Activated CD4-positive, alpha-beta T cell treated with anti-CD3 and anti-CD28 coated beads, Interleukin-2, amount 10 ng/mL, durations not matched to agents 24 days and 14 days (primary cell): ENCODE measurements at regions of chr5 and their contacts with region 1.

Region 1: GRCh38 chr5:100903039-100903887 is at the start of gene ST8SIA4:
- DNase-seq: peak; percentile 97
- H3K4me3 Mint-ChIP-seq: peak within 1 kb of the TSS; percentile 99
- H3K27ac Mint-ChIP-seq: peak within 1 kb of the TSS; percentile 96
- H3K4me1 Mint-ChIP-seq: peaks cover 35% of the 10 kb centered on the region
- H3K27me3 Mint-ChIP-seq: no peaks in the 10 kb centered on the region
- total RNA-seq, gene ST8SIA4: 61.3 and 62.3 TPM in 2 replicates

Region 2: DNA sequence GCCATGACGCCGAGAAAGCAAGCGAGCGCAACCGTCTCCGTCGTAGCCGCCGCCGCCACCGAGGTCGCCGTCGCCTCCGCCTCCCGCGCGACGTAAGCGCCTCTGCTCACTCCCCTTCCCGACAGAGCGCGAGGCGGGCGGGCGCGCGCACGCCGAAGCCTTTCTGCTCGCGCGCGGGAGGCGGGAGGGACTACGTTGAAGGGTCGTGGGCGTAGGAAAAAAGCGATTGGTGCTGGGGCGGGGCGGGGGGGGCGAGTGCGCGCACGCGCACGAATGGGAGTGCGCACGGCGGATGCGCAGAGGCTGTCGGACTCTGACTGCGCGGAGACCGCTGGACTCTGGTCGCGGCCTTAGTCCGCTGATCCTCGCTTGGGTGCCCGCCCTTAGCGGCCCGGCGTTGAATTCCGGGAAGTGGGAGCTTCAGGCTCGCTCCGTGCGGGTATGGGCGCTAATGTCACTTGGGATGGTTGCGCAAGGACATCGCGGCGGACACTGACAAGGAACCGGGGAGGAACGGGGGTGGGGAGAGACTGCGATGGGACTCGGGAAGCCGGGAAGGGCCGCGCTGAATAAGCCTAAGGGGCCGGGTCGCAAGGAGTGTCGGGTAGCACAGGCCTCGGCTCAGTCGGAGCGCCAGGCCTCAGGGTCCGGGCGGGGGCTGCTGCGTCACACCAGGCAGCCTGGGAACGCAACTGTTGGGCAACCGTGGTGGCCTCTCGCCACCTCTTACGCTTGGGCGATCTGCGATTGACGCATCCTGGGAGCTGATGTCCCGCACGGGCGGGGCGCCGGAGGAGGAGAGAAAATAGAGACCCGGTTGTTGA is 1974.2 kb before region 1 on chr5 and contains the start of gene CHD1:
- intact Hi-C with region 1: loop called (anchors 5 kb)
- DNase-seq: peak; percentile 98
- H3K4me3 Mint-ChIP-seq: peak within 1 kb of the TSS; percentile 95
- H3K27ac Mint-ChIP-seq: peak within 1 kb of the TSS; percentile 99
- H3K4me1 Mint-ChIP-seq: peaks cover 40% of the 10 kb centered on the region
- H3K27me3 Mint-ChIP-seq: peaks cover 5% of the 10 kb centered on the region
- total RNA-seq, gene CHD1: 74.2 and 80.6 TPM in 2 replicates

Region 3: DNA sequence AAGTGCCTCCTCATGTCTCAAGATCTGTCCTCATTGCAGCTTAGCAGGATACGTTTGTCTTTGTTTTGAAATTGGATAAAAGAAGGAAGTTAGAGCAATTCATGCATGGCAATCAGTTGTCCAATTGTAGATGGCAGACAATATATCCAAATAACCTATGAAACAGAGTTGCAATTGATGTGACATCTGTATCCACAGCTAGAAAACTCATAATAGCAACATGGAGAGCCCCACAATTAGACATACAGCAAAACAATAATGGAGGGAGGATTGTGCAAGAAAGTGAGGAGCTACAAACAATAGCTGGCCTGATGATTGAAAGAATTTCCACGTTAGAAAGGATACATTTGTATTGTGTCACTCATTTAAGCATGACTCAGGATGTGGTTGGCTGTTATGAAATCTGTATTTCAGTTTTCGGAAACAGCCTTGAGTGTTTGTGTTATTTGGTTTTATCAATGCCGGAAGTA is 236.1 kb before region 1 on chr5:
- intact Hi-C with region 1: loop called (anchors 5 kb)
- DNase-seq: peak; percentile 66
- H3K4me3 Mint-ChIP-seq: no peak overlapping the region
- H3K27ac Mint-ChIP-seq: no peak overlapping the region
- H3K4me1 Mint-ChIP-seq: peaks cover 9% of the 10 kb centered on the region
- H3K27me3 Mint-ChIP-seq: peaks cover 9% of the 10 kb centered on the region

Region 4: DNA sequence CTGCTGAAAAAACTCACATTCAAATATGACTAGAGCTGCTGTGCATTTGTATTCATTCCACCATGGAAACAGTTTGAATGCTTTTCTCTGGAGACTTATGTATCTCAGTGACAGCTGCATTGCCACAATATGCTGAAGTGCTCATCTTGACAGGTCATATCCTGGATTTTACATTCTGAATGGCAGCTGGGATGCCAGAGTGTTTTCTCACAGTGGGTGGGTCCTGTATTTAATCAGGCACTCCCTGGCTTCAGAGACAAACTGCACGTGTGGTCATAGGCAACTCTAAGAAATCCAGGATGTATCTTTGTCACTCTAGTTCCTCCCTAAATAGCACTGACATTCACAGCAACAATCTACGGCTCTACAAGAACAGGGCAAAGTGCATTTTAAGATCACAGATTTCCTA is 75.8 kb before region 1 on chr5:
- intact Hi-C with region 1: loop called (anchors 1 kb)
- DNase-seq: no peak
- H3K4me3 Mint-ChIP-seq: no peak overlapping the region
- H3K27ac Mint-ChIP-seq: peak overlapping the region; percentile 45
- H3K4me1 Mint-ChIP-seq: peaks cover 30% of the 10 kb centered on the region
- H3K27me3 Mint-ChIP-seq: no peaks in the 10 kb centered on the region

Region 5: GRCh38 chr5:100860407-100860806 is 42.9 kb before region 1 on chr5:
- intact Hi-C with region 1: loop called (anchors 1 kb)
- DNase-seq: no peak
- H3K4me3 Mint-ChIP-seq: peak overlapping the region; percentile 27
- H3K27ac Mint-ChIP-seq: peak overlapping the region; percentile 88
- H3K4me1 Mint-ChIP-seq: peaks cover 44% of the 10 kb centered on the region
- H3K27me3 Mint-ChIP-seq: no peaks in the 10 kb centered on the region

Region 6: GRCh38 chr5:100913298-100913697 is 10.0 kb after region 1 on chr5:
- intact Hi-C with region 1: loop called (anchors 1 kb)
- DNase-seq: no peak
- H3K4me3 Mint-ChIP-seq: no peak overlapping the region
- H3K27ac Mint-ChIP-seq: peak overlapping the region; percentile 46
- H3K4me1 Mint-ChIP-seq: peaks cover 19% of the 10 kb centered on the region
- H3K27me3 Mint-ChIP-seq: no peaks in the 10 kb centered on the region

Region 7: GRCh38 chr5:101364469-101364868 is 461.2 kb after region 1 on chr5:
- intact Hi-C with region 1: no loop called
- DNase-seq: no peak
- H3K4me3 Mint-ChIP-seq: no peak overlapping the region
- H3K27ac Mint-ChIP-seq: no peak overlapping the region
- H3K4me1 Mint-ChIP-seq: no peaks in the 10 kb centered on the region
- H3K27me3 Mint-ChIP-seq: no peaks in the 10 kb centered on the region